HepG2 (cell line): ENCODE measurements at regions of chr15 and their contacts with region 1.

Region 1: GRCh38 chr15:50675536-50676144 is 11.0 kb downstream of the TRPM7 start:
- DNase-seq: no peak
- ATAC-seq: no peak
- H3K4me3 ChIP-seq: no peak overlapping the region
- H3K27ac ChIP-seq: no peak overlapping the region
- H3K4me1 ChIP-seq: peaks cover 15% of the 10 kb centered on the region; the same call in 1 of the 2 replicates
- H3K27me3 ChIP-seq: no peaks in the 10 kb centered on the region; a peak in 1 of 5 replicates
- CTCF ChIP-seq: peak; percentile 54
- EP300 ChIP-seq: no peak
- POLR2A ChIP-seq: no peak
- RAD21 ChIP-seq: no peak

Region 2: GRCh38 chr15:50562735-50563640 is 112.7 kb before region 1 on chr15:
- CTCF ChIA-PET with region 1: no interaction called
- POLR2A ChIA-PET with region 1: no interaction called
- in situ Hi-C with region 1: no loop called
- intact Hi-C with region 1: no loop called
- DNase-seq: no peak
- ATAC-seq: no peak
- H3K4me3 ChIP-seq: no peak overlapping the region
- H3K27ac ChIP-seq: no peak overlapping the region
- H3K4me1 ChIP-seq: no peaks in the 10 kb centered on the region
- H3K27me3 ChIP-seq: no peaks in the 10 kb centered on the region
- CTCF ChIP-seq: no peak
- EP300 ChIP-seq: no peak
- POLR2A ChIP-seq: no peak
- RAD21 ChIP-seq: no peak

Region 3: GRCh38 chr15:50876989-50877360 is 201.3 kb after region 1 on chr15:
- CTCF ChIA-PET with region 1: interaction called, 15 read pairs
- POLR2A ChIA-PET with region 1: no interaction called
- in situ Hi-C with region 1: loop called (anchors 5 kb)
- intact Hi-C with region 1: loop called (anchors 1 kb)
- DNase-seq: peak; percentile 78
- ATAC-seq: peak; percentile 69
- H3K4me3 ChIP-seq: peak overlapping the region; percentile 41 to 64 (median 55)
- H3K27ac ChIP-seq: no peak overlapping the region
- H3K4me1 ChIP-seq: peaks cover 38% of the 10 kb centered on the region; the same call in 1 of the 2 replicates
- H3K27me3 ChIP-seq: 0 out of 5 replicates have a peak, but pooled peaks cover 0 to 5% of the 10 kb centered on the region in 2 experiments
- CTCF ChIP-seq: peak; percentile 94
- EP300 ChIP-seq: no peak
- POLR2A ChIP-seq: no peak
- RAD21 ChIP-seq: peak; percentile 86

Region 4: DNA sequence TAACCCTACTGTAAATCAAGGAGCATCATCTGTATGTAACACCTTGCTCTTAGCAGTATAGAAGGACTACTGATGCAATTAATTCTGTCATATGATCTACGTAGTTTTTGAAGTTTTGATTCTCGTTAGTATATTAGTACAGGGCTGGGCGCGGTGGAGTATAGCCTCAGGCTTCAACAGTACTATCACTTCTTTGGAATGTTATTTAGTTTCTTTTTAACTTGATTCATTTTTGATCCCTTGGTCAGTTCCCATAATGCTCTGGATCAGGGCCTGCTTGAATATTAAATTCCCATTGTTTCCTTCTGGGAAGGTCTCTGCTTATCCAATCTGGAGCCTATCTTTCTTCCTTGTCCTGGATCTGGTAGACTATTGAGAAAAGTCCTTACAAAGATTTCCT is 208.9 kb after region 1 on chr15:
- CTCF ChIA-PET with region 1: interaction called, 25 read pairs
- POLR2A ChIA-PET with region 1: no interaction called
- in situ Hi-C with region 1: loop called (anchors 5 kb)
- intact Hi-C with region 1: no loop called
- DNase-seq: no peak
- ATAC-seq: no peak
- H3K4me3 ChIP-seq: peak overlapping the region in 1 of 3 experiments; percentile 59; a peak in 1 of 6 replicates
- H3K27ac ChIP-seq: no peak overlapping the region
- H3K4me1 ChIP-seq: peaks cover 18% of the 10 kb centered on the region
- H3K27me3 ChIP-seq: no peaks in the 10 kb centered on the region; a peak in 1 of 5 replicates
- CTCF ChIP-seq: no peak
- EP300 ChIP-seq: no peak
- POLR2A ChIP-seq: no peak
- RAD21 ChIP-seq: no peak